Right cardiac atrium (tissue), 5 donors: ENCODE measurements at regions of chr10 and their contacts with region 1.

Region 1: GRCh38 chr10:100433253-100434240 is 29.3 kb upstream of the WNT8B start:
- DNase-seq: peak; percentile 89 to 96 (median 93)
- ATAC-seq: peak; percentile 88 to 92
- H3K4me3 ChIP-seq: no peak overlapping the region
- H3K27ac ChIP-seq: no peak overlapping the region
- H3K4me1 ChIP-seq: no peaks in the 10 kb centered on the region
- H3K27me3 ChIP-seq: no peaks in the 10 kb centered on the region

Region 2: DNA sequence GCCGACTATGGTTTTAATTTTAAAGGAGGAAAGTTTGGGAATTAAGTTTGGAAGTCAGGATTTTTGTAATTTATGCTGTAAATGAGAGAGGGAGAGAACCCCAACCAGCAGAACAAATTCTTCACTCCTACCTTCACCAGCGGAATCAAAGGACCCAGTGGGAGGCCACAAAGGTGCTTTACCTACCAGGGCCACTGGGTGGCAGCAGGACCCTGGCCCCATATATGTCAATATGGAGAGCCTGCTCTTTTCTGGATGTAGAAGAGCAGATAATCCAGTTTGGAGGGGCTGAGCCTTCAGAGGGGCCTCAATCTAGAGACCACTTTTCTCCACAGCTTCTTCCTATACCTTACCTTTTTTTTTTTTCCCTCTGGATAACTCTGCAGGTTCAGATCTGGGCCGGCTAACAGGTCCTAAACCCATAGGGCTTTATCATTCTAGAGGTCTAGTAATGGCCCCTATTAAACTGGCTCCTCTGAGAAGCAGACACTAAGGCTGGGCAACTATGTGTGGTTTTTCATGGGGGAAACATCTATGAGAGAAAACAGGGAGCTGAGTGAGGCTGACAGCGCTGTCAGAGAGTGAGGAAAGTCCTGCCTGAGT is 95.0 kb before region 1 on chr10:
- intact Hi-C with region 1: loop called (anchors 1 to 5 kb)
- DNase-seq: peak; percentile 68 to 91 (median 89)
- ATAC-seq: peak; percentile 50 to 77
- H3K4me3 ChIP-seq: no peak overlapping the region
- H3K27ac ChIP-seq: no peak overlapping the region
- H3K4me1 ChIP-seq: peaks cover 5% of the 10 kb centered on the region
- H3K27me3 ChIP-seq: no peaks in the 10 kb centered on the region

Region 3: DNA sequence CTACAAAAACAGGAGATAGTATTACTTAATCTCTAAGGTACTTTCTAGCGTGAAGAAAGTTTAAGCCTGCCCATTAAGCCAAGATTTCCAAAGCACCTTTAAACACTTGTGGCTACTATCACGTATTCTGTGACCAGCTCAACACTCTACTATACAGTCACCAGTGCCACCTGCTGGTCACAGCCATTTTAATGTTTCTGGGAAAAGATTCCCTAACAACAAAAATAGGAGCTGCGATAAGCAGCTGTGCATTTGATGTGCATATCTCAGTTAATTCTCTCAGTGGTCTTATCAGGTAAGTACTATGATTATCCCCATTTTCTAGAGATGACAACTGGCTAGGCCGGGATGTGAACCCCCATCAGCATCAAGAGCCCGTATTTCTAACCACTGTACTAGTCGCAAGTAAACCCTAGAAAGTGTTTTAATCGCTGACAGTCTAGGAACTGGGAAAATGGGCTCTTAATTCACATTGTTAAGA is 85.3 kb after region 1 on chr10:
- intact Hi-C with region 1: loop called in 1 of 4 experiments (anchors 5 kb)
- DNase-seq: peak; percentile 38 to 83 (median 68)
- ATAC-seq: peak; percentile 67 to 68
- H3K4me3 ChIP-seq: peak overlapping the region; percentile 43
- H3K27ac ChIP-seq: no peak overlapping the region
- H3K4me1 ChIP-seq: no peaks in the 10 kb centered on the region
- H3K27me3 ChIP-seq: no peaks in the 10 kb centered on the region